Right ventricle myocardium inferior (tissue), 1 donor: ENCODE measurements at regions of chrX and their contacts with region 1.

Region 1: GRCh38 chrX:68511255-68511654 is 12.4 kb downstream of the YIPF6 start:
- DNase-seq: no peak
- ATAC-seq: no peak

Region 2: GRCh38 chrX:68710870-68711576 is 199.8 kb after region 1 on chrX:
- intact Hi-C with region 1: loop called (anchors 5 kb)
- DNase-seq: no peak
- ATAC-seq: peak; percentile 79